Mammary epithelial cell (primary cell): ENCODE measurements at regions of chr13 and their contacts with region 1.

Region 1: DNA sequence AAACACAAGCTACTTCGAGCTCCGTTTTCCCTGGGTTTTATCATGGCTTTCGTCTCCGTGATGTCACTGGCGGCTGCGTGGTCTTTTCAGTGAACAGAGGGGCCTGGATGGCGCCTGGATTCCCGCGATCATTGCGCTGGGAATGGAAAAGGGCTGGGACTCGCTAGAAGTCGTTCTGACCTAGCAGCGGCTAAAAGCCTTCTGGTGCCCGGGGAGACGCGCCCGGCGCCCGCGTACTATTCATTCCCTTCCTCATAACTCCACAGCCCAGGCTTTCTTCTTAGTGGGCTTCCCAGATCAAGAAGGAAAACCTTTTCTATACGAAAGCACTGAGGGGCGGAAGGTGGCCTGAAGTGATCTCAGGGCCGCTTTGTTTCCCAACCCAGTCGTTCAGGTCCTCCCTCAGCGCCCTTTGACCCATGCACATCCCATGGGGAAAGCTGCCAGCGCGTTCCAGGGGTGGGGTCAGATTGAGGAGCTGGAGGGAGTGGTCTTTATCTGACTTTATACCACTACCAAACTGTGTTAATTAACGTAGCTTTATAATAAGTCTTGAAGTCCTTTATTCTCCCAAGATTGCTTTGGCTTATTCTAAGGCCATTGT is 96.6 kb downstream of the ELF1 start:
- DNase-seq: no peak
- H3K4me3 ChIP-seq: no peak overlapping the region
- H3K27ac ChIP-seq: no peak overlapping the region
- H3K4me1 ChIP-seq: peaks cover 4% of the 10 kb centered on the region
- H3K27me3 ChIP-seq: no peaks in the 10 kb centered on the region
- CTCF ChIP-seq: no peak

Region 2: GRCh38 chr13:40377783-40378182 is 544.8 kb before region 1 on chr13:
- CTCF ChIA-PET with region 1: no interaction called
- dilution Hi-C with region 1: no loop called
- in situ Hi-C with region 1: no loop called
- intact Hi-C with region 1: no loop called
- DNase-seq: no peak
- H3K4me3 ChIP-seq: no peak overlapping the region
- H3K27ac ChIP-seq: no peak overlapping the region
- H3K4me1 ChIP-seq: no peaks in the 10 kb centered on the region
- H3K27me3 ChIP-seq: no peaks in the 10 kb centered on the region
- CTCF ChIP-seq: no peak

Region 3: GRCh38 chr13:40445557-40445990 is 477.0 kb before region 1 on chr13:
- CTCF ChIA-PET with region 1: no interaction called
- dilution Hi-C with region 1: no loop called
- in situ Hi-C with region 1: no loop called
- intact Hi-C with region 1: no loop called
- DNase-seq: peak; percentile 98
- H3K4me3 ChIP-seq: no peak overlapping the region
- H3K27ac ChIP-seq: peak overlapping the region; percentile 80
- H3K4me1 ChIP-seq: peaks cover 18% of the 10 kb centered on the region
- H3K27me3 ChIP-seq: no peaks in the 10 kb centered on the region
- CTCF ChIP-seq: no peak

Region 4: GRCh38 chr13:40789275-40790133 is 133.0 kb before region 1 on chr13 and contains the start of gene SLC25A15:
- CTCF ChIA-PET with region 1: no interaction called
- dilution Hi-C with region 1: no loop called
- in situ Hi-C with region 1: no loop called
- intact Hi-C with region 1: loop called (anchors 2 kb)
- DNase-seq: peak; percentile 78
- H3K4me3 ChIP-seq: peak within 1 kb of the TSS; percentile 79 to 99 (median 89)
- H3K27ac ChIP-seq: peak within 1 kb of the TSS; percentile 70
- H3K4me1 ChIP-seq: no peaks in the 10 kb centered on the region
- H3K27me3 ChIP-seq: no peaks in the 10 kb centered on the region
- CTCF ChIP-seq: no peak
- total RNA-seq, gene SLC25A15: 15.3 to 17.2 TPM

Region 5: GRCh38 chr13:40940841-40941240 is 18.3 kb after region 1 on chr13:
- CTCF ChIA-PET with region 1: no interaction called
- dilution Hi-C with region 1: no loop called
- in situ Hi-C with region 1: no loop called
- intact Hi-C with region 1: no loop called
- DNase-seq: no peak
- H3K4me3 ChIP-seq: no peak overlapping the region
- H3K27ac ChIP-seq: no peak overlapping the region
- H3K4me1 ChIP-seq: no peaks in the 10 kb centered on the region
- H3K27me3 ChIP-seq: no peaks in the 10 kb centered on the region
- CTCF ChIP-seq: no peak

Region 6: GRCh38 chr13:41019011-41019487 is 96.5 kb after region 1 on chr13 and contains the start of gene ELF1:
- CTCF ChIA-PET with region 1: no interaction called
- dilution Hi-C with region 1: no loop called
- in situ Hi-C with region 1: no loop called
- intact Hi-C with region 1: loop called (anchors 5 kb)
- DNase-seq: peak; percentile 90
- H3K4me3 ChIP-seq: peak within 1 kb of the TSS; percentile 58 to 73 (median 72)
- H3K27ac ChIP-seq: peak within 1 kb of the TSS; percentile 100
- H3K4me1 ChIP-seq: peaks cover 12% of the 10 kb centered on the region
- H3K27me3 ChIP-seq: no peaks in the 10 kb centered on the region
- CTCF ChIP-seq: no peak
- total RNA-seq, gene ELF1: 48.0 to 66.3 TPM

Region 7: GRCh38 chr13:41040606-41041319 is 118.2 kb after region 1 on chr13:
- CTCF ChIA-PET with region 1: no interaction called
- dilution Hi-C with region 1: no loop called
- in situ Hi-C with region 1: no loop called
- intact Hi-C with region 1: no loop called
- DNase-seq: no peak
- H3K4me3 ChIP-seq: no peak overlapping the region
- H3K27ac ChIP-seq: no peak overlapping the region
- H3K4me1 ChIP-seq: no peaks in the 10 kb centered on the region
- H3K27me3 ChIP-seq: no peaks in the 10 kb centered on the region
- CTCF ChIP-seq: no peak

Region 8: GRCh38 chr13:41054212-41054877 is 131.8 kb after region 1 on chr13:
- CTCF ChIA-PET with region 1: interaction called, 12 read pairs
- dilution Hi-C with region 1: no loop called
- in situ Hi-C with region 1: no loop called
- intact Hi-C with region 1: no loop called
- DNase-seq: peak; percentile 48
- H3K4me3 ChIP-seq: no peak overlapping the region
- H3K27ac ChIP-seq: no peak overlapping the region
- H3K4me1 ChIP-seq: peaks cover 15% of the 10 kb centered on the region
- H3K27me3 ChIP-seq: no peaks in the 10 kb centered on the region
- CTCF ChIP-seq: peak; percentile 54 to 61